ENCODE measurements at regions of chr2 and their contacts with region 1.

Region 1: GRCh38 chr2:201860636-201861066 is 54.3 kb downstream of the CDK15 start:
- DNase-seq: peak; percentile 43
- ATAC-seq: peak; percentile 95
- H3K4me3 ChIP-seq: no peak overlapping the region
- H3K27ac ChIP-seq: no peak overlapping the region
- H3K4me1 ChIP-seq: no peaks in the 10 kb centered on the region
- H3K27me3 ChIP-seq: peaks cover 0 to 5% of the 10 kb centered on the region in 2 experiments; a peak in 2 of 4 replicates
- CTCF ChIP-seq: peak; percentile 75 to 86 (median 79)
- EP300 ChIP-seq: no peak
- POLR2A ChIP-seq: no peak
- RAD21 ChIP-seq: peak; percentile 95

Region 2: GRCh38 chr2:200592406-200593075 is 1268.1 kb before region 1 on chr2:
- CTCF ChIA-PET with region 1: no interaction called
- POLR2A ChIA-PET with region 1: no interaction called
- RAD21 ChIA-PET with region 1: no interaction called
- SMC1A ChIA-PET with region 1: no interaction called
- in situ Hi-C with region 1: no loop called
- intact Hi-C with region 1: no loop called
- DNase-seq: no peak
- ATAC-seq: peak; percentile 37; the same call in 1 of the 3 replicates
- H3K4me3 ChIP-seq: no peak overlapping the region
- H3K27ac ChIP-seq: no peak overlapping the region
- H3K4me1 ChIP-seq: no peaks in the 10 kb centered on the region
- H3K27me3 ChIP-seq: 0 out of 4 replicates have a peak, but pooled peaks cover 0 to 6% of the 10 kb centered on the region in 2 experiments
- CTCF ChIP-seq: no peak
- EP300 ChIP-seq: no peak
- POLR2A ChIP-seq: no peak
- RAD21 ChIP-seq: no peak

Region 3: GRCh38 chr2:201795607-201796477 is 64.8 kb before region 1 on chr2:
- CTCF ChIA-PET with region 1: no interaction called
- POLR2A ChIA-PET with region 1: no interaction called
- RAD21 ChIA-PET with region 1: interaction called, 3 read pairs
- SMC1A ChIA-PET with region 1: interaction called, 3 read pairs
- in situ Hi-C with region 1: no loop called
- intact Hi-C with region 1: loop called (anchors 5 kb)
- DNase-seq: no peak
- ATAC-seq: peak; percentile 46; the same call in 1 of the 3 replicates
- H3K4me3 ChIP-seq: no peak overlapping the region
- H3K27ac ChIP-seq: no peak overlapping the region
- H3K4me1 ChIP-seq: no peaks in the 10 kb centered on the region
- H3K27me3 ChIP-seq: no peaks in the 10 kb centered on the region
- CTCF ChIP-seq: peak; percentile 42 to 69 (median 54); a peak in 5 of 6 replicates
- EP300 ChIP-seq: no peak
- POLR2A ChIP-seq: no peak
- RAD21 ChIP-seq: peak; percentile 59

Region 4: GRCh38 chr2:201909961-201910361 is 49.3 kb after region 1 on chr2:
- CTCF ChIA-PET with region 1: interaction called, 14 read pairs
- POLR2A ChIA-PET with region 1: no interaction called
- RAD21 ChIA-PET with region 1: interaction called, 4 read pairs
- SMC1A ChIA-PET with region 1: interaction called, 10 read pairs
- in situ Hi-C with region 1: no loop called
- intact Hi-C with region 1: no loop called
- DNase-seq: peak; percentile 27
- ATAC-seq: peak; percentile 91
- H3K4me3 ChIP-seq: no peak overlapping the region
- H3K27ac ChIP-seq: no peak overlapping the region; the same call in 1 of the 2 replicates
- H3K4me1 ChIP-seq: peaks cover 10% of the 10 kb centered on the region
- H3K27me3 ChIP-seq: no peaks in the 10 kb centered on the region
- CTCF ChIP-seq: no peak
- EP300 ChIP-seq: no peak
- POLR2A ChIP-seq: no peak
- RAD21 ChIP-seq: no peak

Region 5: GRCh38 chr2:202007015-202007982 is 146.6 kb after region 1 on chr2:
- CTCF ChIA-PET with region 1: interaction called, 13 read pairs
- POLR2A ChIA-PET with region 1: no interaction called
- RAD21 ChIA-PET with region 1: interaction called, 7 read pairs
- SMC1A ChIA-PET with region 1: interaction called, 7 read pairs
- in situ Hi-C with region 1: no loop called
- intact Hi-C with region 1: no loop called
- DNase-seq: no peak
- ATAC-seq: no peak
- H3K4me3 ChIP-seq: no peak overlapping the region
- H3K27ac ChIP-seq: no peak overlapping the region
- H3K4me1 ChIP-seq: peaks cover 23% of the 10 kb centered on the region
- H3K27me3 ChIP-seq: no peaks in the 10 kb centered on the region
- CTCF ChIP-seq: no peak
- EP300 ChIP-seq: no peak
- POLR2A ChIP-seq: no peak
- RAD21 ChIP-seq: 0 out of 2 replicates have a peak, but pooled peaks have one; percentile 8

Region 6: GRCh38 chr2:202104278-202104870 is 243.7 kb after region 1 on chr2:
- CTCF ChIA-PET with region 1: interaction called, 22 read pairs
- POLR2A ChIA-PET with region 1: no interaction called
- RAD21 ChIA-PET with region 1: interaction called, 7 read pairs
- SMC1A ChIA-PET with region 1: interaction called, 10 read pairs
- in situ Hi-C with region 1: no loop called
- intact Hi-C with region 1: loop called (anchors 1 kb)
- DNase-seq: peak; percentile 13
- ATAC-seq: peak; percentile 95
- H3K4me3 ChIP-seq: no peak overlapping the region
- H3K27ac ChIP-seq: no peak overlapping the region
- H3K4me1 ChIP-seq: no peaks in the 10 kb centered on the region
- H3K27me3 ChIP-seq: peaks cover 2 to 3% of the 10 kb centered on the region in 2 experiments; a peak in 1 of 4 replicates
- CTCF ChIP-seq: peak; percentile 65 to 91 (median 81)
- EP300 ChIP-seq: no peak
- POLR2A ChIP-seq: no peak
- RAD21 ChIP-seq: peak; percentile 77

Region 7: GRCh38 chr2:202178342-202178958 is 317.8 kb after region 1 on chr2:
- CTCF ChIA-PET with region 1: interaction called, 81 read pairs
- POLR2A ChIA-PET with region 1: no interaction called
- RAD21 ChIA-PET with region 1: interaction called, 34 read pairs
- SMC1A ChIA-PET with region 1: interaction called, 41 read pairs
- in situ Hi-C with region 1: no loop called
- intact Hi-C with region 1: loop called (anchors 1 kb)
- DNase-seq: peak; percentile 24
- ATAC-seq: peak; percentile 97
- H3K4me3 ChIP-seq: no peak overlapping the region
- H3K27ac ChIP-seq: no peak overlapping the region
- H3K4me1 ChIP-seq: no peaks in the 10 kb centered on the region
- H3K27me3 ChIP-seq: no peaks in the 10 kb centered on the region
- CTCF ChIP-seq: peak; percentile 77 to 81 (median 78)
- EP300 ChIP-seq: no peak
- POLR2A ChIP-seq: no peak
- RAD21 ChIP-seq: peak; percentile 97

Measured in GM12878 (cell line).